GM18951 (cell line): ENCODE measurements at regions of chr1 and their contacts with region 1.

Region 1: GRCh38 chr1:8015036-8015808 is 10.9 kb downstream of the ERRFI1 start:
- POLR2A ChIP-seq: no peak

Region 2: GRCh38 chr1:8314346-8315280 is 299.4 kb after region 1 on chr1:
- in situ Hi-C with region 1: loop called (anchors 10 kb)
- POLR2A ChIP-seq: no peak

Region 3: DNA sequence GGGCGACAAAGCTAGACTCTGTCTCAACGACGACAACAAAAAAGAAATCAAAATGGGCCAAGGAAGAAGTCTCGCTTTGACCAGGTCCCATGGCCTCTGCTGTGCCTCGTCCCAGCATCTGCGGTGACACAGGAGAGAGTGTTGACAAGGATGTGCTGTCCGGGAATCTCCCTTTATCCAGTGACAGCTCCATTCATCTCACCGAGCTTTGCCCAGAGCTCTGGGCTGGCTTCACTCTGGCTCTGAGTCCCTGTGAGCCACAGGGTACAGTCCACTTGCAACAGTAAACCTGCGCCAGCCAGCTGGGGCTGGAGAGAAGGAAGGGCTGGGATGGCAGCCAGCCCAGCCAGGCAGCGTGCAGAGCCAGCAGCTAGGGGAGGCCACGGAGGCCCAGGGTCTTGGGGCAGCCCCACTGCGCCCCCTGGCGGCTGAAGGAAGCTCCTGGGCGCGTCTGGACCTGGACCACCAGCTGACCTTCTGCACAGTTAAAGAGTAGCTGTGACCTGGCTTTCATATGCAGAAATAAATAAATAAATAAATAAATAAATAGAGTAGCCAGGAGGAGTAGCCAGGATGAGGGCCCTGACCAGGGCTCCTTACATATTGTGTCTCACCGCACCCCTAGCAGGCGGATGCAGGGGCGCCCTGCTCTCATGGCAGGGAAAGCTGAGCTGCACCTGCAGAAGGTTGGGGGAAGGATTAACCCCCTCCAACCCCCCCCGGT is 833.6 kb after region 1 on chr1:
- in situ Hi-C with region 1: loop called (anchors 25 kb)
- POLR2A ChIP-seq: no peak